Ascending aorta (tissue), 2 donors: ENCODE measurements at regions of chr9 and their contacts with region 1.

Region 1: DNA sequence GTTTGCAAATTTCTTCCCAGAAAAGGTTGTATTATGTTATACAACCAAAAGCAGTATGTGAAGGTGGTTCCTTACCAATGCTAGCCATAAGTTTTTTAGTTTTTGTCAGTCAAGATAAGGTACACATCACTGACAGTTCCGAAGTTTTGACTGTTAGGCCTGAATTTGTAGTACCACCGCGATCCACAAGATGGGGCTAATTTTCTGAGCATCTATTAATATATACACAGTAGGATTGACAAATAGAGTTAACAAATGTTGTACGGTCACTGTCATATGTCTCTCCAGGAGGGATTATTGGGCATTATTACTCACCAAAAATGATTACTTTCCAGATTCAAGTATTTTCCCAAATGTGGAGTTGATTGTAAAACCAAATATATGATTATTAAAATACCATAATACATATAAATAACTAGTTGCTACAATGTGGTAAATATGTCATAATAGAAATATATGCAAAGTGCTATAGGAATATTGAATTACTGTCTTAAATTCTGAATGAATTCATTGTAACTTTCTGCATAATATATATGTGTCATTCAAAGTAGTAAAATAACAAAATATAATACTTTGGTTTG is 28.4 kb upstream of the LRRC19 start:
- DNase-seq: peak in 1 of 2 donors; percentile 71
- H3K4me3 ChIP-seq: no peak overlapping the region
- H3K27ac ChIP-seq: no peak overlapping the region
- H3K4me1 ChIP-seq: no peaks in the 10 kb centered on the region
- H3K27me3 ChIP-seq: no peaks in the 10 kb centered on the region
- CTCF ChIP-seq: peak; percentile 33 to 83 (median 76)

Region 2: GRCh38 chr9:26597542-26598149 is 436.3 kb before region 1 on chr9:
- intact Hi-C with region 1: no loop called
- DNase-seq: no peak
- H3K4me3 ChIP-seq: no peak overlapping the region
- H3K27ac ChIP-seq: no peak overlapping the region
- H3K4me1 ChIP-seq: no peaks in the 10 kb centered on the region
- H3K27me3 ChIP-seq: no peaks in the 10 kb centered on the region
- CTCF ChIP-seq: no peak

Region 3: DNA sequence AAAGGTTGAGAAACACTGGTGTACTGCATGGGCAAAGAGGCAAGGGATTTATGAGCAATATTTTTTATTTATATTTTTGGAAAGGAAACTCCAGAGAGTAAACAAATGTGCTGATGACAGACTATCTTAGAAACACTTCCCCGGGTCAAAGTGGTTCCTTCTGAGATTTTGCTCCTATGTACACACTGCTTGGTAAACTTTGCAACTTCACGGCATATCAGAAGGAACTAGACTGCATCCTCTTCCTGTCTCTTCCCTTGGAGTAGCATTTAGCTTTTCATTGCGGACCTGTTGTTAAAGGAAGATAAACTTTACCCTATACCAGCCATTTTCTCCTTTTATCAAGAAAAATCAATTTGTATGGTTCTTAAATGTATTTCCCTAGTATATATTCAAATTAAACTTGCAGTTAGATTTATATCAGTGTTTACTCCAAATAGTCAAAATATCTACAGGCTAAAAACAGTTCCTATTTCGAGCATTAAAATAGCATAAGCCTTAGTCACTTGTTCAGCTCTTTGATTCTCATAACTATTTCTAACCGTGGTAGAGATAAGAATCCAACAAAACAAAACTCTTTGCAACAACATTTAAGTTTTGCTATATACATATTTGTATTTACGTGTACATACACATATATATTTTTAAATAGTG is 19.6 kb after region 1 on chr9:
- intact Hi-C with region 1: no loop called
- DNase-seq: no peak
- H3K4me3 ChIP-seq: no peak overlapping the region
- H3K27ac ChIP-seq: no peak overlapping the region
- H3K4me1 ChIP-seq: no peaks in the 10 kb centered on the region
- H3K27me3 ChIP-seq: no peaks in the 10 kb centered on the region
- CTCF ChIP-seq: no peak

Region 4: GRCh38 chr9:27276193-27277030 is 242.5 kb after region 1 on chr9:
- intact Hi-C with region 1: loop called (anchors 1 kb)
- DNase-seq: no peak
- H3K4me3 ChIP-seq: peak overlapping the region in 1 of 2 donors; percentile 38
- H3K27ac ChIP-seq: no peak overlapping the region
- H3K4me1 ChIP-seq: no peaks in the 10 kb centered on the region
- H3K27me3 ChIP-seq: no peaks in the 10 kb centered on the region
- CTCF ChIP-seq: peak; percentile 56 to 76 (median 60)

Region 5: GRCh38 chr9:27925815-27926214 is 891.9 kb after region 1 on chr9:
- intact Hi-C with region 1: no loop called
- DNase-seq: no peak
- H3K4me3 ChIP-seq: no peak overlapping the region
- H3K27ac ChIP-seq: no peak overlapping the region
- H3K4me1 ChIP-seq: no peaks in the 10 kb centered on the region
- H3K27me3 ChIP-seq: no peaks in the 10 kb centered on the region
- CTCF ChIP-seq: no peak